Psoas muscle (tissue), 8 donors: ENCODE measurements at regions of chr3 and their contacts with region 1.

Region 1: GRCh38 chr3:23202921-23203707 is at the start of gene UBE2E2:
- DNase-seq: peak; percentile 82 to 92
- ATAC-seq: peak; percentile 87 to 91 (median 88)
- H3K4me3 ChIP-seq: peak within 1 kb of the TSS; percentile 87
- H3K27ac ChIP-seq: peak within 1 kb of the TSS; percentile 96
- H3K4me1 ChIP-seq: peaks cover 31% of the 10 kb centered on the region
- H3K27me3 ChIP-seq: no peaks in the 10 kb centered on the region
- CTCF ChIP-seq: no peak
- total RNA-seq, gene UBE2E2: 34.0 to 38.2 (median 37.1) TPM

Region 2: DNA sequence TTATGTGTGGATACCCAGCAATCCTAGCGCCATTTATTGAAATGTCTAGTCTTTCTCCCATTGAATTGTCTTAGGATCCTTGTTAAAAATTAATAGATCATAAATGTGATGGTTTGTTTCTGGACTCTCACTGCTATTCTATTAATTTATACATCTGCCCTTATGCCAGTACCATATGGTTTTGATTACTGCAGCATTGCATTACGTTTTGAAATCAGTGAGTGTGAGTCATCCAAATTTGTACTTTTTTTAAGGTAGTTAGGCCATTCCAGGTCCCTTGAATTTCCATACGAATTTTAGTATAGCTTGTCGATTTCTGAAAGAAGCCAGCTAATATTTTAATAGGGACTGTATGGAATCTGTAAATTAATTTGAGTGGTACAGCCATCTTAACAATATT is 803.5 kb before region 1 on chr3:
- intact Hi-C with region 1: no loop called
- DNase-seq: no peak
- ATAC-seq: no peak
- H3K4me3 ChIP-seq: no peak overlapping the region
- H3K27ac ChIP-seq: no peak overlapping the region
- H3K4me1 ChIP-seq: no peaks in the 10 kb centered on the region
- H3K27me3 ChIP-seq: no peaks in the 10 kb centered on the region
- CTCF ChIP-seq: no peak

Region 3: DNA sequence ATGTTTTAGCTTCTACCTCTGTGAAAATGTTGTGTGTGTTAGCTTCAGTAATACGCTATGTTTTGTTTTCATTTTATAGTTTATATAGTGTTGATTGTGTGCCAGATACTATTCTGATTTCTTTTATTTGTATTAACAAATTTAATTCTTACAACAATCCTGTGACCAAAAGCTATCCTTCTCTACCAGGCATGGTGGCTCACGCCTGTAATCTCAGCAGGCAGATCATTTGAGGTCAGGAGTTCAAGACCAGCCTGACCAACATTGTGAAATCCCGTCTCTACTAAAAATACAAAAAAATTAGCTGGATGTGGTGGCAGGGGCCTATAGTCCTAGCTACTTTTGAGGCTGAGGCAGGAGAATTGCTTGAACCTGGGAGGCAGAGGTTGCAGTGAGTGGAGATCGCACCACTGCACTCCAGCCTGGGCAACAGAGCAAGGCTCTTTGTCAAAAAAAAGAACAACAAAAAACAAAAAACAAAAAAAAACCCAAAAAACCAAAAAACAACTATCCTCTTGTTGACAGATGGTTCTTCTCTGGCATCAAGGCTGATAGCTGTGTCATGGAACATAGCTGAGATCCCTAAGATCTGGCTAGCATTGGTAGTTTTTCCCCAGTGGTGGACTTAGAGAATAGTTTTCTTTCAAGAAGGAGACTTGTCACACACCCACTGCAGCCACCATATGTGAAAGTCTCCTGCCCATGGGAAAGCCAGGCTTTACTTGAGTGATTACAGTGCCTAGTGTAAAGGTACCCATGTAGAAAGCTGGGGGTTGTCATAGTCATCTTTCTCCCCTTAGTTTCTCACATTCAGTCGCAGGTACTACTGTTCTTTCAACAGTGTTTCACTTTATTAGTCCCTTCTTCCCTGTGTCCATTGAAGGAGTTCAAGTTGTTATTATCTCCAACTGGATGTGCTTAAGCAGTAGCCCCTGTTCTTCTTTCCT is 116.5 kb after region 1 on chr3:
- intact Hi-C with region 1: loop called in 1 of 2 experiments (anchors 10 kb)
- DNase-seq: no peak
- ATAC-seq: peak in 1 of 4 donors; percentile 36
- H3K4me3 ChIP-seq: no peak overlapping the region
- H3K27ac ChIP-seq: no peak overlapping the region
- H3K4me1 ChIP-seq: peaks cover 25% of the 10 kb centered on the region
- H3K27me3 ChIP-seq: no peaks in the 10 kb centered on the region
- CTCF ChIP-seq: no peak

Region 4: GRCh38 chr3:23805633-23806533 is 602.8 kb after region 1 on chr3 and contains the start of gene UBE2E1:
- intact Hi-C with region 1: loop called in 1 of 2 experiments (anchors 5 kb)
- DNase-seq: peak; percentile 68 to 87
- ATAC-seq: peak; percentile 58 to 73 (median 68)
- H3K4me3 ChIP-seq: peak within 1 kb of the TSS; percentile 93
- H3K27ac ChIP-seq: peak within 1 kb of the TSS; percentile 93
- H3K4me1 ChIP-seq: peaks cover 25% of the 10 kb centered on the region
- H3K27me3 ChIP-seq: no peaks in the 10 kb centered on the region
- CTCF ChIP-seq: no peak
- total RNA-seq, gene UBE2E1: 54.1 to 112 (median 90.1) TPM